Motor neuron (in vitro differentiated cells): ENCODE measurements at regions of chr11 and their contacts with region 1.

Region 1: DNA sequence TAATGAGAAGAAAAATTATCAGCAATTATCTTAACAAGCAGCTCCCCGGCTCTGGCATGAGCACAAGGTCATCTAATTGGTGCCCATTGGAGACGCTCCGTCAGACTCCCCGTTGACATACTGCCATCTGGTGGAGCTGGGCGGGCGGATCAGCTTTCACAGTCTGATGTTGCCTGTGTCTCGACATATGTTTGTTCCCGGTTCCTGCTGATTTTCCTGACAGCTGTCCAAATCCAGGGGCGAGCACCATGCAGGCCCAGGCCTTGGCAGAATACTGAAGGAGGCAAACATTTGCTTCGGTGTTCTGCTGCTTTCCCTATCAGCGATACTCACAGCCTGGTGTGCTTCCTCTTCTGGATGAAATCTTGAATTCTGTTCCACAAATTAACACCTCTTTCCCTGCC is 43.8 kb upstream of the BARX2 start:
- ATAC-seq: peak; percentile 87 to 99 (median 94)
- H3K4me3 ChIP-seq: no peak overlapping the region
- H3K27ac ChIP-seq: no peak overlapping the region
- H3K4me1 ChIP-seq: no peaks in the 10 kb centered on the region

Region 2: DNA sequence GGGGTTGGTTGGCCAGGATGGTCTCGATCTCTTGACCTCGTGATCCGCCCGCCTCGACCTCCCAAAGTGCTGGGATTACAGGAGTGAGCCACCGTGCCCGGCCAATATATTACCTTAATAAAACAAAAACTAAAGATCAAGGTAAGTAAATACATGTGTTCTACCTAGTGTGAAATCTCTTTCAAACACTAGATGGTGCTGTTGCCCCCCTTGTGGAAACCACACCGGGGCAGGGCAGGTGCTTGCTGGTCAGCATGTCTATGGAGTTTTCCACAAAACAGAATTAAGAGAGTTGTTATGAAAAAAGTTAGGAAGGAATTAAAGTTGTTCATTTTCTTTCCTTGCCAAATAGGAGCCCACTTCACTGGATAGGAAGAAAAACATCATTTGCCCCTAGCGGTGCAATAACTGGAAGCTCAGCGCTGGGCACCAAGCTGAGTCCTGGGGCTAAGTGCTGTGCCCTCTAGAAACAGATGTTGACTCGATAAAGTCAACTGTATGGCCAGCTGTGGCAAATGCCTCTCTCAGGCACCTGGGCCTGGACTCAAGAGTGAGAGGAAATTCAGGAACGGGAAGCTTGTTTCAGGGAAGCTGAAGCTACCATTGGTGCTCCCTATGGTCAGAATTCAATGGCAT is 447.1 kb before region 1 on chr11:
- in situ Hi-C with region 1: loop called in 1 of 9 experiments (anchors 25 kb)
- ATAC-seq: peak; percentile 76 to 94 (median 82)
- H3K4me3 ChIP-seq: no peak overlapping the region
- H3K27ac ChIP-seq: no peak overlapping the region
- H3K4me1 ChIP-seq: peaks cover 18 to 20% of the 10 kb centered on the region in 2 donors

Region 3: DNA sequence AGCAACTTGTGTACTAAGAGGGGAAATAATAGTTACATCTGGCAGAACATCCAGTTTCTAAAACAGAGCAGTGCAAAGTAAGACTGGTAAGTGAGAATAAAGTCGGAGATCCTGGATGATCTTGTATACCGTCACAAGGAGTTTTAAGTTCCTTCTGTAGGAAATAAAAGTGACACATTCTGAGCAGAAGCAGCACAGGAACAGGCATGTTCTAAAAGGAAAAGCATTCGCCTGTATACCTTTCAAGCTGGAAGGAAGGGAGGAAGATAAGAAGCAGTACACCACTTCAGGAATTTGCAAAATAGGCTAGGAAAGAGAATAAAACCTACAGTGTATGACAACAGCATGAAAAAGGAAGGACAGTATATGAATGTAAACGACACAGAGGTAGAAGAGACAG is 283.0 kb before region 1 on chr11:
- in situ Hi-C with region 1: no loop called
- ATAC-seq: no peak
- H3K4me3 ChIP-seq: no peak overlapping the region
- H3K27ac ChIP-seq: no peak overlapping the region
- H3K4me1 ChIP-seq: peaks cover 0 to under 1% of the 10 kb centered on the region in 2 donors

Region 4: DNA sequence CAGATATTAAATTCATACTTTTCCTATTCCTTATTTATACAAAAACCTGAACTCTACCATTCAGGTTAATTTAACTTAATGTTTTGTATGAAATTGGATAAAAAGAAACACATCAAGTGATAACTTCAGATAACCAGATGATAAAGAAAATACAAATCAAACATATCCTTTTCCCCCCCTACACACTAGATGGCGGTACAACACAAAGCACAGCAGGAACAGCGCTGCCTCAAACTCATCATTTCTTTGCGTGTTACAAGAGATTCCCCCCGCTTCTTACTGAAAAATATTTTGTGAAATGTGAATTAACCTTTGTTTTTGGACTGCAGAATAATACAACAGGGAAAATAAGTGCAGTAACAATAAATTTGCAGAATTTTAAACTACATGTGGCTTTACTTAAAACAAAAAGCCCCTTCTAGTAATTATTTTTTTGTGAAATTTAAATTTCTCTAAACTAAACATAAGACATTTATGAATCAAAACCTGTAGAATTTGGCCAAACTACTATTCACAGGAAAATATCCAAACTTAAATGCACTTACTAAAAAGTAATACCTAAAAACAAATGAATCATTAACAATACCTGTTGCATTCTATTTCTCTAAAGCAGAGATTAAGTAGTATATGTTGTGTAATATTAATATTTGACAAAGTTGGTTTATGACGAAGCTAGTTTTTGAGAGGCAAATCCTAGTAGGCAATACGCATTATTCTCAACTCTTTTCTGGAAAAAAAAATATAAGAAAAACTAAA is 214.1 kb before region 1 on chr11:
- in situ Hi-C with region 1: loop called in 5 of 9 experiments (anchors 10 to 25 kb)
- ATAC-seq: peak in 4 of 8 experiments; percentile 22 to 55 (median 42)
- H3K4me3 ChIP-seq: no peak overlapping the region
- H3K27ac ChIP-seq: no peak overlapping the region
- H3K4me1 ChIP-seq: no peaks in the 10 kb centered on the region

Region 5: GRCh38 chr11:129223701-129224149 is 108.1 kb before region 1 on chr11:
- in situ Hi-C with region 1: no loop called
- ATAC-seq: peak in 3 of 8 experiments; percentile 16 to 46 (median 29)
- H3K4me3 ChIP-seq: no peak overlapping the region
- H3K27ac ChIP-seq: no peak overlapping the region
- H3K4me1 ChIP-seq: peaks cover 0 to 3% of the 10 kb centered on the region in 2 donors

Region 6: DNA sequence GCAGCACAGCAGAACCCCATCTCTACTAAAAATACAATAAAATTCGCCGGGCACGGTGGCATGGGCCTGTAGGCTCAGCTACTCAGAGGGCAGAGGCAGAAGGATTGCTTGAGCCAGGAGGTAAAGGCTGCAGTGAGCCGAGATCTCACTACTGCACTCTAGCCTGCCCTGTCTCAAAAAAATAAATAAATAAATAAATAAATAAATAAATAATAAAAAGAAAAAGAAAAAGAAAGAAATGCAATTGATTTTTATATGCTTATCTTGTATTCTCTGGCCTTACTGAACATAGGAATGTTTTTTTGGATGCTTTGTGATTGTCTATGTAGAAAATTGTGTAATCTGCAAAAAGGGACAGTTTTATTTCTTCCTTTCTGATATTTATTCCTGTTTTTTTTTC is 176.3 kb after region 1 on chr11:
- in situ Hi-C with region 1: no loop called
- ATAC-seq: no peak
- H3K4me3 ChIP-seq: no peak overlapping the region
- H3K27ac ChIP-seq: no peak overlapping the region
- H3K4me1 ChIP-seq: no peaks in the 10 kb centered on the region

Region 7: GRCh38 chr11:129611661-129612446 is 280.0 kb after region 1 on chr11:
- in situ Hi-C with region 1: no loop called
- ATAC-seq: peak in 5 of 8 experiments; percentile 44 to 63 (median 50)
- H3K4me3 ChIP-seq: no peak overlapping the region
- H3K27ac ChIP-seq: no peak overlapping the region
- H3K4me1 ChIP-seq: peaks cover 15 to 21% of the 10 kb centered on the region in 2 donors